BJ (cell line): ENCODE measurements at regions of chr2 and their contacts with region 1.

Region 1: GRCh38 chr2:217993817-217994463 is 8.9 kb downstream of the TNS1 start:
- DNase-seq: no peak
- H3K4me3 ChIP-seq: no peak overlapping the region
- H3K27me3 ChIP-seq: no peaks in the 10 kb centered on the region
- CTCF ChIP-seq: peak; percentile 78

Region 2: DNA sequence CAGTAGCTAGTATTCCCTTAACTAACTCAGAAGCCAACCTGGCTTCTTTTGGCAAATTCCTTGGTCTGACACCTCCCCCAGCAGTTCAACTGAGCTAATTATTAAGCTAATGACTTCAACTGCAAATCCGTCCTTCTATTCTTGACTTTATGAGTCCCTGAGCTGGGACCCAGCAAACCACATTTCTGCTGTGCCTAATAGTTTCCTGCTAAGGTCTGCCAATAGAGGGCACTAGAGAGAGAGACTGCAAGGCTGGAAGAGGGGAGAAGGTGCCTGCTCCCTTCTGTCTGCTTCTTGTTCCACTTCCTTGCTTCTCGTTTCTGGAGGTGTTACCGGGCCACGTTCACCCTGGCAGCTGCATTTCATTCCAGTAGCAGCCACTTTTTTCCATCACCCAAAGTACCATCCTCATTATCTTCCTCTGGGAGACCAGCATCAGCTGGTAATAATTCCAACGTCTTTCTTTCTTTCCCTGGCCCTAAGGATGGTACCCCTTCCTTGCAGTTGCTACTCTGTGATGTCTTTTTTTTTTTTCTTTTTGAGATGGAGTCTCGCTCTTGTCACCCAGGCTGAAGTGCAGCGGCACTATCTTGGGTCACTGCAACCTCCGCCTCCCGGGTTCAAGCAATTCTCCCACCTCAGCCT is 343.1 kb before region 1 on chr2:
- CTCF ChIA-PET with region 1: no interaction called
- POLR2A ChIA-PET with region 1: no interaction called
- DNase-seq: no peak
- H3K4me3 ChIP-seq: no peak overlapping the region
- H3K27me3 ChIP-seq: no peaks in the 10 kb centered on the region
- CTCF ChIP-seq: peak; percentile 83

Region 3: GRCh38 chr2:217943446-217944389 is 50.2 kb before region 1 on chr2:
- CTCF ChIA-PET with region 1: interaction called, 10 read pairs
- POLR2A ChIA-PET with region 1: no interaction called
- DNase-seq: no peak
- H3K4me3 ChIP-seq: peak overlapping the region; percentile 37
- H3K27me3 ChIP-seq: no peaks in the 10 kb centered on the region
- CTCF ChIP-seq: peak; percentile 46

Region 4: DNA sequence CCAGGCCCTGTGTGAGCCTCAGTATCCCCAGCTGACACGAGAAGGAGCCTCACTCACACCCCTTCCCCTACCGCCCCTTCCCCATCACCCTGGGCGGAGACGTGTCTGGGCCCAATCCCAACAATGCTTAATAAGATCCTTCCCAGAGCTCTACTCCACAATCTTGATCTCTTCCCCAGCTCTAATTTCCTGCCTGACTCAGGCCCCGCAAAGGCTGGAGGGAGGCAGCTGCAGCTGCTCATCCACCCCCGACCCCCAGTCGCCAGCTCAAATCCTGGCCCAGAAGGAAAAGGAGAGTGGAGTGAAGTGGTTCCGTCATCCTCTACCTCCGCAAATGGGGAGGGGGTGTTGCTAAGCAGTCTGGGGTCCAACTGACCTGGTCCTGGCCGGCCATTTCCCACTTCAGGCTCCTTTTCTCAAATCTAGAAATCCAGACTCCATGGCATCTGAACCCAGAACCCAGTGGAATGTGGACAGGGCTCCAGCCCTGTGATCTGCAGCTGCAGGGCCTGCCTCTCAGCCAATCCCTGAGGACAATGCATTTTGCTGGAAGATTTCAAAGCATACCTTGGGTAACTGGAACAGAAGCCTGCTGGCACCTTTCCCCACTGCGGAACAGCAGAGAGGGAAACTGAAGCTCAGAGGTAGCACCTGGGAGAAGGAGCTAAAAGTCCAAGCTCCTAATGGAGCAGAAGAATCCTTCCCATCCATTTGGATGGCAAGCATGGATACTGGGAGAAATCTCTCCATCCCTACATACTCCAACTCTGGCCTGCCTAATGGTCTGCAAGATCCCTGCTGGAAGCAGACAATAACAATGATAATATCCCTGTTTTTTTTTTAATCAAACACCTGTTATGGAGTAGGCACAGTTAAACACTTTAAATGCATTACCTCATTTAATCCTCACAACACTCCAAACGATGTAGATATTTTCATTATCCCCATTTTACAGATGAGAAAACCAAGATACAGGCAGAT is 14.4 kb after region 1 on chr2:
- CTCF ChIA-PET with region 1: interaction called, 17 read pairs
- POLR2A ChIA-PET with region 1: no interaction called
- DNase-seq: no peak
- H3K4me3 ChIP-seq: no peak overlapping the region
- H3K27me3 ChIP-seq: no peaks in the 10 kb centered on the region
- CTCF ChIP-seq: no peak